Activated CD4-positive, alpha-beta T cell treated with anti-CD3 and anti-CD28 coated beads for 36 hours (primary cell): ENCODE measurements at regions of chr6 and their contacts with region 1.

Region 1: DNA sequence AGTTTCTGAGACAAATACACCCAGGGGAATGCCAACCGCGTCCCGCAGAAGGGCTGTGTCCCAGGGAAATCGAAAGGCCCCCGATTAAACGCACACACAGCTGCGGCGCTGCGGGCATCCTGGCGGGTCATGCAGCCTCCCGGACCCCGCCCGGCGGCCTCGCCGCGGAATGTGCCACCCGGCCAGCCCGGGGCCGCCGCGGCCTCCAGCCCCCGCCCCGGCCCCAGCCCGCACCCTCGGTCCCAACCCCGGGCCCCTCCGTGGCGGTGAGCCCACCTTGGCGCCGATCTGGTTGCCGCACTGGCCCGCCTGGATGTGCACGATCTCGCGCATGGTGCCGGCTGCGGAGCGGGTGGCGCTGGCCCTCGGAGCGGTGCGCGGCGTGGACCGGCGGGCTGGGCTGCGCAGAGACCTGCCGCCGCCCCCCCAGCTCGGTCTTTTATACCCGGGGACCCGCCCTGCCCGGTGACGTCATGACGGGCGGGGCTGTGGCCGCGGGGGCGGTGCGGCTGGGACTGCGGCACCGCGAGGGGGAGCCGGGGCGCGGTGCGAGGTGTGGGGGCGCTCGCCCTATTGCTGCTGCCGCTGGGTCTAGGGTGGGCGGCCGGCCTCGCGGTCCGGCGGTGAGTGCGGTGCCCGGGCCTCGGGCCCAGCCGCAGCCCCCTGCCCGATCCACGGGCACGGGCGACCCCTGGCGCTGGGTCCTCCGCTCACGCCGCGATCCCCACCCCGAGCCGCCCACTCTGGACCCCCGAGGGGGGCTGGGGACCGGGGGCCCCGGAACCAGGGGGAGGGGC is at the start of gene TUBB2A:
- DNase-seq: peak; percentile 87
- ATAC-seq: peak; percentile 68
- H3K4me3 Mint-ChIP-seq: peak within 1 kb of the TSS; percentile 74
- H3K27ac Mint-ChIP-seq: peak within 1 kb of the TSS; percentile 55
- H3K4me1 Mint-ChIP-seq: peaks cover 25% of the 10 kb centered on the region
- H3K27me3 Mint-ChIP-seq: peaks cover 20% of the 10 kb centered on the region
- total RNA-seq, gene TUBB2A: 1.7 to 1.8 TPM

Region 2: DNA sequence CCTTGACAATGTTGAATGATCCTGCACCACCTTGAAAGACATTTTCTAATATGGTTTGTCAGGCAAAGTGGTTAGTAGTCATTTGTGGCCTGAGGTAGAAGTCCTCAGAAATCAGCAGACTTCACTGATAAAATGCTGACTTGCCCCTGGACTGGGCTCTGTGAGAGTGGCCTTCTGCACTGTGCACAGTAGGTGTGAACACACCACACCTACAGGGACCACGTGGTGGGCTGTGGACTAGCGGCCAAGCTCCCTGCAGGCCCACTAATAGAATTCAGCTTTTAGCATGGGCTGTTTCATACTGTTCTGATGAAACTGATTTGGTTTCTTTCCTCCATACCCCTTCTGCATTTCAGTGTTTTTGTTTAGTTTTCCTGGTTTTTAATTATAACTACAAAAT is 31.5 kb before region 1 on chr6:
- CTCF ChIA-PET with region 1: no interaction called
- POLR2A ChIA-PET with region 1: no interaction called
- intact Hi-C with region 1: loop called in 1 of 2 experiments (anchors 1 kb)
- DNase-seq: no peak
- ATAC-seq: no peak
- H3K4me3 Mint-ChIP-seq: no peak overlapping the region
- H3K27ac Mint-ChIP-seq: no peak overlapping the region
- H3K4me1 Mint-ChIP-seq: peaks cover 10% of the 10 kb centered on the region
- H3K27me3 Mint-ChIP-seq: no peaks in the 10 kb centered on the region

Region 3: DNA sequence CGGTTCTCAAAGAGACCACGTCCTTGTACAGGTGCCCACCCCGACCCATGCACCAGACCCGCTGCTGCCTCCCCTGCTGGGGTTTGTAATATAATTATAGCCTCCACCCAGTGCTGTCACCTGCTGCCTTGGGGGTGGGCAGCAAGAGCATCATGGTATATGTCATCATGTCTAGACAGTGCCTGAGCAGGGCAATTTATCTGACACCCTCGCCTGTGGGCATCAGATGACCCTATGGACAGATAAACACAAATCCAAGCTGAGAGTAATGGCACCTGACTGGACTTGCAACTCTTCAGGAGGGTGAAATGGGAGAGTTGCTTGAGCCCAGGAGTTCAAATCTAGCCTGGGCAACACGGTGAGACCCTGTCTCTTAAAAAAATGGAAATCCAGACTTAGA is 23.0 kb after region 1 on chr6:
- CTCF ChIA-PET with region 1: no interaction called
- POLR2A ChIA-PET with region 1: no interaction called
- intact Hi-C with region 1: loop called (anchors 1 kb)
- DNase-seq: no peak
- ATAC-seq: no peak
- H3K4me3 Mint-ChIP-seq: no peak overlapping the region
- H3K27ac Mint-ChIP-seq: no peak overlapping the region
- H3K4me1 Mint-ChIP-seq: peaks cover 2% of the 10 kb centered on the region
- H3K27me3 Mint-ChIP-seq: peaks cover 7% of the 10 kb centered on the region